ENCODE measurements at regions of chr4 and their contacts with region 1.

Region 1: GRCh38 chr4:99088481-99089365 is at the start of gene ADH5:
- DNase-seq: peak; percentile 61 to 86 (median 80)
- H3K4me3 ChIP-seq: peak within 1 kb of the TSS; percentile 52 to 91 (median 79)
- H3K27ac ChIP-seq: peak within 1 kb of the TSS; percentile 52 to 96 (median 89)
- H3K27me3 ChIP-seq: no peaks in the 10 kb centered on the region
- CTCF ChIP-seq: peak in 12 of 56 donors; percentile 5 to 27 (median 12)
- total RNA-seq, gene ADH5: 53.3 to 92.9 (median 74.8) TPM

Region 2: GRCh38 chr4:98143001-98143899 is 945.5 kb before region 1 on chr4 and contains the start of gene STPG2:
- intact Hi-C with region 1: loop called in 1 of 2 experiments (anchors 10 kb)
- DNase-seq: peak; percentile 77 to 96 (median 92)
- H3K4me3 ChIP-seq: peak within 1 kb of the TSS; percentile 57 to 95 (median 77)
- H3K27ac ChIP-seq: peak within 1 kb of the TSS; percentile 59 to 96 (median 90)
- H3K27me3 ChIP-seq: no peaks in the 10 kb centered on the region
- CTCF ChIP-seq: peak in 54 of 56 donors; percentile 12 to 66 (median 49)
- total RNA-seq, gene STPG2: 0.65 to 5.0 (median 2.1) TPM in 119 of 120 experiments, not detected in the other

Region 3: GRCh38 chr4:99134586-99134985 is 45.9 kb after region 1 on chr4:
- intact Hi-C with region 1: no loop called
- DNase-seq: no peak
- H3K4me3 ChIP-seq: no peak overlapping the region
- H3K27ac ChIP-seq: no peak overlapping the region
- H3K27me3 ChIP-seq: no peaks in the 10 kb centered on the region
- CTCF ChIP-seq: no peak